ENCODE measurements at regions of chr12 and their contacts with region 1.

Region 1: GRCh38 chr12:40107098-40107802 is 1.4 kb upstream of the SLC2A13 start:
- DNase-seq: peak; percentile 87 to 91
- ATAC-seq: peak in 7 of 8 donors; percentile 21 to 80 (median 68)
- H3K4me3 ChIP-seq: peak overlapping the region in 9 of 10 donors; percentile 5 to 99 (median 41)
- H3K27ac ChIP-seq: peak overlapping the region in 2 of 10 donors; percentile 33 to 93
- H3K4me1 ChIP-seq: peaks cover 0 to 38% (median 31%) of the 10 kb centered on the region in 9 donors
- H3K27me3 ChIP-seq: peaks cover 0 to 4% (median 0%) of the 10 kb centered on the region in 7 donors
- CTCF ChIP-seq: peak; percentile 88 to 97 (median 94)

Region 2: DNA sequence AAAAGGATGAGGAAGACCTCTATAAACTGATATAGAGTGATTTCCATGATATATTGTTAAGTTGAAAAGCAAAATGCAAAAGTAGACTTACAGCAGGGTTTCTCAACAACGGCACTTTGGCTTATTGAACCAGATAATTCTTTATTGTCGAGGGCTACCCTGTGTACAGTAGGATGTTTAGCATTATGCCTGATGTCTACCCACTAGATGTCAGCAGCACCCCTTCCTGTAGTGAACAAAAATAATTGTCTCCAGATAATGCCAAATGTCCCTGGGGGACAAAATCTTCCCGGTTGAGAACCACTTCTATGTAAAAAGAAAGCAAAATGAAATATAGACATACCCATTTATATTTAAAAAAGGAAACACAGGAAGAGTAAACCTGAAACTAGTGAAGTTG is 520.0 kb before region 1 on chr12:
- intact Hi-C with region 1: loop called in 1 of 10 experiments (anchors 10 kb)
- DNase-seq: peak in 1 of 2 donors; percentile 13
- ATAC-seq: peak in 5 of 8 donors; percentile 67 to 76 (median 72)
- H3K4me3 ChIP-seq: no peak overlapping the region
- H3K27ac ChIP-seq: no peak overlapping the region
- H3K4me1 ChIP-seq: peaks cover 0 to 8% (median 0%) of the 10 kb centered on the region in 9 donors
- H3K27me3 ChIP-seq: no peaks in the 10 kb centered on the region
- CTCF ChIP-seq: peak in 7 of 9 donors; percentile 34 to 66 (median 45)

Region 3: GRCh38 chr12:40010899-40011774 is 96.1 kb before region 1 on chr12:
- intact Hi-C with region 1: loop called (anchors 1 to 10 kb)
- DNase-seq: peak in 1 of 2 donors; percentile 75
- ATAC-seq: peak; percentile 90 to 97 (median 94)
- H3K4me3 ChIP-seq: peak overlapping the region in 8 of 10 donors; percentile 8 to 48 (median 40)
- H3K27ac ChIP-seq: peak overlapping the region in 7 of 10 donors; percentile 8 to 68 (median 48)
- H3K4me1 ChIP-seq: peaks cover 7 to 24% (median 20%) of the 10 kb centered on the region in 9 donors
- H3K27me3 ChIP-seq: no peaks in the 10 kb centered on the region
- CTCF ChIP-seq: peak; percentile 67 to 94 (median 86)

Region 4: GRCh38 chr12:40032433-40033241 is 74.6 kb before region 1 on chr12:
- intact Hi-C with region 1: loop called in 2 of 10 experiments (anchors 2 to 5 kb)
- DNase-seq: no peak
- ATAC-seq: peak in 2 of 8 donors; percentile 65 to 71
- H3K4me3 ChIP-seq: no peak overlapping the region
- H3K27ac ChIP-seq: no peak overlapping the region
- H3K4me1 ChIP-seq: peaks cover 0 to 10% (median 7%) of the 10 kb centered on the region in 9 donors
- H3K27me3 ChIP-seq: no peaks in the 10 kb centered on the region
- CTCF ChIP-seq: no peak

Region 5: DNA sequence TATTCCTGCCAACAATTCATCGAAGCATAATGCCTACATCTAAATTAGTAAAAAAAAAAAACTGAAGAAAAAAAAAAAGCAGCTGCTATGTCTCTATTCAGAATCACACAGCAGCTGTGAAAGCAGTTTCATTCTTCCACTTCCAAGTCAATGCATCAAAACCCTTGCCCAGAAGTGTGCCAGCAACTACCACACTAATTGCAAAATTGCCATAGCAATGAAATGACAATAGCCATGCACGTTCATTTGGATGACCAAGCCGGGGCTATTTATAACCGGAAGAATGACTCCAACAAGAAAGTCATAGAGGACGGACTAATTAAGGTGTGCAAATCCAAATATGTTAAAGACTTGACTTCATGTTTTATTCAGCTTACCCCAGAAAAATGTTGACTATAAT is 43.8 kb before region 1 on chr12:
- intact Hi-C with region 1: loop called in 2 of 10 experiments (anchors 5 to 10 kb)
- DNase-seq: peak in 1 of 2 donors; percentile 54
- ATAC-seq: peak; percentile 42 to 91 (median 82)
- H3K4me3 ChIP-seq: peak overlapping the region in 4 of 10 donors; percentile 6 to 23 (median 20)
- H3K27ac ChIP-seq: peak overlapping the region in 7 of 10 donors; percentile 44 to 69 (median 57)
- H3K4me1 ChIP-seq: peaks cover 0 to 43% (median 8%) of the 10 kb centered on the region in 9 donors
- H3K27me3 ChIP-seq: no peaks in the 10 kb centered on the region
- CTCF ChIP-seq: no peak

Measured in heart right ventricle (tissue), 16 donors.